ENCODE measurements at regions of chr10 and their contacts with region 1.

Region 1: DNA sequence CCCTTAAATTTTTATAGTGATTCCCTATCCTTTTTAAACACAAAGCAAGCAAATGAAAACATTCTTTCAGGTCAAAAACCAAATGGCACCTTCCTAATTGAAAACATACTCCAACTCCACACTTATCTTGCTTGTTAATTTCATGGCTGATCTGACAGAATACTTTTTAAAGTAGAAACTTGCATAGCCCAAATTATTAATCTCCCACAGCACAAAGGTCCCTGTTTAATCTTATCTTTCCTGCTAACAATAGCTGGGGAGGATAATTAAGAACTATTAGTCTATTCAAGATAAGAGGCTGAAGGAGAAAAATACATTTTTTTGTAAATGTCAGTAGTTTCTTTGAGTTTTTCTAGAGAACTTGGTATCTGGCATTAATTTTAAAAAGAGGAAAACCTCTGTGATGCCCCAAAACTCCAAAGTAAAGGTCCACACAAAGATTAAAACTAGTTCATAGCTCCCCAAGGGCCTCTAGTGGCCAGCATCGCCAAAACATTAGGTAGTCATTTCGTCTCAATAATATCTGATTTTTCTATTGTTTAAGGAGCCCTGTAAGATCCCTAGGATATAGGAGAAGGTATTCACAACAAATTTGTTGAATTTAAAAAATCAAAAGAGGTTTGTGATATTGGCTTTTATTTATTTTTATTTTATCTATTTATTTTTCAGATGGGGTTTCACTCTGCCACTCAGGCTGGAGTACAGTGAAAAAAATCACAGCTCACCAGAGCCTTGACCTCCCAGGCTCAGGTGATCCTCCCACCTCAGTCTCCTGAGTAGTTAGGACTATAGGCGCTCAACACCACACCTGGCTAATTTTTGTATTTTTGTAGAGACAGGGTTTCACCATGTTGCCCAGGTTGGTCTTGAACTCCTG is 14.7 kb downstream of the CDNF start:
- DNase-seq: peak; percentile 29 to 65 (median 59)
- H3K4me3 ChIP-seq: no peak overlapping the region
- H3K27ac ChIP-seq: no peak overlapping the region
- H3K4me1 ChIP-seq: peaks cover 0 to 12% (median 0%) of the 10 kb centered on the region in 4 experiments
- H3K27me3 ChIP-seq: no peaks in the 10 kb centered on the region

Region 2: GRCh38 chr10:14414901-14415300 is 408.2 kb before region 1 on chr10:
- CTCF ChIA-PET with region 1: no interaction called
- POLR2A ChIA-PET with region 1: no interaction called
- DNase-seq: no peak
- H3K4me3 ChIP-seq: no peak overlapping the region
- H3K27ac ChIP-seq: no peak overlapping the region
- H3K4me1 ChIP-seq: no peaks in the 10 kb centered on the region
- H3K27me3 ChIP-seq: peaks cover 0 to 3% (median 0%) of the 10 kb centered on the region in 5 experiments

Region 3: DNA sequence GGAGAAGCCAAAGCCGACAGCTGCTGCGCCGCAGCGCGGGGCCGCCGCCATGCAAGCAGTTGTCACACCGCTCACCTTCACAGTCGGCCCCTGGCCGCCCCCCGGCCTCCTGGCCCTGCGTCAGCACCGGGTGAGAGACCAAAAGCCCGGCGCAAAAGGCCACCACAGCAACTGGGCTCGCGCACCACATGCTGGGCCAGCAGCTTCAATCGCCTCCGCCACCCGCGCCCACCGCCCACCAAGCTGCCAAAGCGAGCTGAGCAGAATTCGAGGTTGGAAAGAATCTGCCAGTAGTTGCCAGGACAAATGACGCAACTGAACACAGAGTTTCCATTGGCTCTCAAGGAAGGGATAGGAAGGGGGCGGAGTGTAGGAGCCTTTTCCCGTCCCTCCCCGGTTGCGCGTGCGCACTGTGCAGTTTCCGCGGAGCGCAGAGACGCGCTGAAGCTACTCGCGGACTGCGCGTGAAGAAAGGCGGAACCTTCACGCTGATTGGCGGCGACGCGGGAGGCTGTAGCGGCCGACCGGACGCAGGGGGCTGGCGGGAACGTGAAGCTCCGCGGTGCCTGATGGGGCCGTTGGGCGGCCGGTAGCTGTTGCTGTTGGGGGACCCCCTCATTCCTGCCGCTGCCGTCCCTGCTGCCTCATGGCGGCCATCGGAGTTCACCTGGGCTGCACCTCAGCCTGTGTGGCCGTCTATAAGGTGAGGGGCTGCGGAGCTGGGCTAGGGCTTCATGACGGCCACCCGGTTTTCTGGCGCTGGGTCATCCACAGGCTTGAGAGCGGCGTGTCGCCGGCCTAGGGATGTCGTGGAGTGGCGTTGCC is 14.9 kb after region 1 on chr10 and contains the starts of genes CDNF, HSPA14 and MSANTD7:
- CTCF ChIA-PET with region 1: interaction called, 10 read pairs
- POLR2A ChIA-PET with region 1: no interaction called
- DNase-seq: peak; percentile 99 to 100 (median 99)
- H3K4me3 ChIP-seq: peak within 1 kb of the TSS; percentile 83 to 98 (median 95)
- H3K27ac ChIP-seq: peak within 1 kb of the TSS; percentile 84 to 93
- H3K4me1 ChIP-seq: peaks cover 9 to 18% (median 16%) of the 10 kb centered on the region in 4 experiments
- H3K27me3 ChIP-seq: no peaks in the 10 kb centered on the region

Measured in common myeloid progenitor, CD34-positive (primary cell).